ENCODE measurements at regions of chr13 and their contacts with region 1.

Region 1: GRCh38 chr13:91348906-91349435 is 1.5 kb downstream of the MIR17HG start:
- DNase-seq: peak in 3 of 4 experiments; percentile 70 to 100 (median 99)
- ATAC-seq: peak; percentile 63
- H3K4me3 ChIP-seq: peak overlapping the region; percentile 58
- H3K27ac ChIP-seq: peak overlapping the region; percentile 85
- H3K4me1 ChIP-seq: peaks cover 19 to 30% of the 10 kb centered on the region in 2 experiments
- H3K27me3 ChIP-seq: no peaks in the 10 kb centered on the region
- CTCF ChIP-seq: no peak
- EP300 ChIP-seq: no peak
- POLR2A ChIP-seq: no peak
- RAD21 ChIP-seq: no peak

Region 2: DNA sequence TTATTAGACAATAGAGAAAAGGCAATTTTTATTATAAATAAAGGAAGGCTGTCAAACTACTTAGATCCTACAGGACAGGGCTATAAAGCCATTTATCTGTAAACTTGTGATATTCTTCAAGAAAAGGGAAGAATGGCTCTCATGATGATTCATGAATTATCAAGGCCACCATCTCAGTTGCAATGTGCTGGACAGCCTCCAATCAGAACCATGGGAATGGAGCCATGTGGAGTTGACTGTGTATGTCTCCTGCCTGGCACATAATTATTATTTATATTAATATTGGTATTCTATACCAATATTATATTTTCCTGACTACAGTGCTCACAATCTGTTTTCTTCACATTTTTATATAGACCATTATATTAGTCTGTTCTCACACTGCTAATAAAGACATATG is 562.0 kb before region 1 on chr13:
- CTCF ChIA-PET with region 1: no interaction called
- POLR2A ChIA-PET with region 1: no interaction called
- in situ Hi-C with region 1: no loop called
- intact Hi-C with region 1: no loop called
- DNase-seq: no peak
- ATAC-seq: no peak
- H3K4me3 ChIP-seq: no peak overlapping the region
- H3K27ac ChIP-seq: no peak overlapping the region
- H3K4me1 ChIP-seq: no peaks in the 10 kb centered on the region
- H3K27me3 ChIP-seq: no peaks in the 10 kb centered on the region
- CTCF ChIP-seq: no peak
- EP300 ChIP-seq: no peak
- POLR2A ChIP-seq: no peak
- RAD21 ChIP-seq: no peak

Region 3: GRCh38 chr13:91133941-91134802 is 214.8 kb before region 1 on chr13:
- CTCF ChIA-PET with region 1: interaction called, 3 read pairs
- POLR2A ChIA-PET with region 1: no interaction called
- in situ Hi-C with region 1: no loop called
- intact Hi-C with region 1: loop called (anchors 2 kb)
- DNase-seq: peak; percentile 78 to 96 (median 90)
- ATAC-seq: peak; percentile 94
- H3K4me3 ChIP-seq: no peak overlapping the region
- H3K27ac ChIP-seq: no peak overlapping the region
- H3K4me1 ChIP-seq: no peaks in the 10 kb centered on the region
- H3K27me3 ChIP-seq: no peaks in the 10 kb centered on the region
- CTCF ChIP-seq: peak in 1 of 3 experiments; percentile 98; a peak in 2 of 6 replicates
- EP300 ChIP-seq: 0 out of 2 replicates have a peak, but pooled peaks have one; percentile 26
- POLR2A ChIP-seq: no peak
- RAD21 ChIP-seq: peak; percentile 95 to 97

Region 4: DNA sequence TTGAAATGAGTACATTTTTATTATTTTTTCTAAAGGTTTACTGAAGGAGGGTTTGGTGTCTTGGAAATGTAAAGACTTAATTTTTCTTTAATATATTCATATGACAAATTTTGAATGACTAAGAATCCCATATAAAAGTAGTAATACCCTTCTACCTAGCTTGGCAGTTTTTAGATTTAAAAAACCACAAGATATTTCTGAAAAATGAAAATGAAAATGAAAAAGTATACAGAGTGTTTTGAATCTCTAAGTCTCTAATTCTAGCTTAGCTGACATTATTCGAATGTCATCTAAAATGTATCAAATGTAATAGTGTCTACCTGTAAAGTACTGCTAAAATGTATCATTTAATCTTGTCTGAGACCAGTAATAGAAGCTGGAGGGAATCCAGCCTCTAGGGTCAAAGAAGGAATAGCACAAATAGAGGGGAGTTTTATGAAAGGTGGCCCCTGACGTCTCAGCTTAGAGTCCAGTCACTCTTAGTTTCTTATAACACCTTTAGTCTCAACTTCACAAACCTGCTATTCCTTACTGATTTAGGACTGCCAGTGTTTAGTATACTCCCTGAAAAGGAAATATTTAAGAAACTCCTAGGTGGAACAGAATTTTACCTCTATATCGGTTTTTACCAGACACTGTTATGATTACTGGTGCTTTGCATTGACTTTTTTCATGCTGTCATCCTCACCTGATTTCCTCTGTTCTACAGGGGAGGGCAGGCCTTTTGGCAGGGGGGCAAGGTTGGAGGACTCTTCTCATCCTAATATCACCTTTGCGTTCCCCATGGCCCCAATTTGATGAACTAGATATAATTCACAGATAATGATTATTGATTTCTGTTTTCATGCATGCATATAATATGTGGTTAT is 17.7 kb before region 1 on chr13:
- CTCF ChIA-PET with region 1: interaction called, 3 read pairs
- POLR2A ChIA-PET with region 1: interaction called, 23 read pairs
- in situ Hi-C with region 1: no loop called
- intact Hi-C with region 1: no loop called
- DNase-seq: no peak
- ATAC-seq: peak; percentile 29
- H3K4me3 ChIP-seq: no peak overlapping the region
- H3K27ac ChIP-seq: no peak overlapping the region
- H3K4me1 ChIP-seq: no peaks in the 10 kb centered on the region
- H3K27me3 ChIP-seq: no peaks in the 10 kb centered on the region
- CTCF ChIP-seq: no peak
- EP300 ChIP-seq: no peak
- POLR2A ChIP-seq: no peak
- RAD21 ChIP-seq: no peak

Region 5: DNA sequence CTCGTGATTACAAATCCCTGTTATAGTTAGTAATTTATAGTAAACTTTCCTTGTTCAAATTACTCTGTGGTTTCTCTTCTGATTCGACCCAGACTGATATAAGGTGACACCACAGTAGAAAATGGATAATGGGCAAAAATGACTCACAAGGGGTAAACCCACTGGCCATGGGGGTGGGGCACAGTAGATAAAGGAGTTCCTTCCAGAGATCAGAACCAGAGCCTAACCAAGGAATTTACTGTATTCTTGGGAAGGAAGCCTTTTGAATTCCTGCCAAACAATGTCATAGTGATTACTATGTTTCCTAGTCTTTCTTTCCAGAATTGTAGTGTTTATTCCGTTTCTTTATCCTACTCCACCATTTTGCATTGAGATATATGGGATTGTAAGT is 20.5 kb after region 1 on chr13:
- CTCF ChIA-PET with region 1: interaction called, 3 read pairs
- POLR2A ChIA-PET with region 1: interaction called, 11 read pairs
- in situ Hi-C with region 1: no loop called
- intact Hi-C with region 1: loop called (anchors 2 kb)
- DNase-seq: peak in 2 of 4 experiments; percentile 60 to 67
- ATAC-seq: peak; percentile 12; the same call in 2 of the 3 replicates
- H3K4me3 ChIP-seq: no peak overlapping the region
- H3K27ac ChIP-seq: no peak overlapping the region
- H3K4me1 ChIP-seq: peaks cover 0 to 9% of the 10 kb centered on the region in 2 experiments; a peak in 3 of 5 replicates
- H3K27me3 ChIP-seq: no peaks in the 10 kb centered on the region
- CTCF ChIP-seq: no peak
- EP300 ChIP-seq: no peak
- POLR2A ChIP-seq: no peak
- RAD21 ChIP-seq: no peak

Region 6: GRCh38 chr13:91398413-91399272 is 49.7 kb after region 1 on chr13 and contains the start of gene GPC5:
- CTCF ChIA-PET with region 1: no interaction called
- POLR2A ChIA-PET with region 1: interaction called, 5 read pairs
- in situ Hi-C with region 1: no loop called
- intact Hi-C with region 1: loop called (anchors 2 kb)
- DNase-seq: peak; percentile 94 to 100 (median 100)
- ATAC-seq: peak; percentile 100
- H3K4me3 ChIP-seq: peak within 1 kb of the TSS; percentile 28
- H3K27ac ChIP-seq: no peak within 1 kb of the TSS
- H3K4me1 ChIP-seq: peaks cover 0 to 13% of the 10 kb centered on the region in 2 experiments; a peak in 3 of 5 replicates
- H3K27me3 ChIP-seq: peaks cover 13 to 24% of the 10 kb centered on the region in 2 experiments
- CTCF ChIP-seq: no peak
- EP300 ChIP-seq: no peak
- POLR2A ChIP-seq: no peak
- RAD21 ChIP-seq: no peak
- polyA plus RNA-seq, gene GPC5: not detected

Region 7: GRCh38 chr13:91540158-91540736 is 191.3 kb after region 1 on chr13:
- CTCF ChIA-PET with region 1: no interaction called
- POLR2A ChIA-PET with region 1: no interaction called
- in situ Hi-C with region 1: no loop called
- intact Hi-C with region 1: loop called (anchors 2 kb)
- DNase-seq: peak; percentile 71 to 94 (median 80)
- ATAC-seq: peak; percentile 93
- H3K4me3 ChIP-seq: no peak overlapping the region
- H3K27ac ChIP-seq: peak overlapping the region; percentile 52
- H3K4me1 ChIP-seq: peaks cover 0 to 8% of the 10 kb centered on the region in 2 experiments; a peak in 2 of 5 replicates
- H3K27me3 ChIP-seq: no peaks in the 10 kb centered on the region
- CTCF ChIP-seq: no peak
- EP300 ChIP-seq: peak; percentile 87; the same call in 1 of the 2 replicates
- POLR2A ChIP-seq: no peak
- RAD21 ChIP-seq: no peak

Measured in K562 (cell line).